CD8-positive, alpha-beta T cell (primary cell): ENCODE measurements at regions of chr20 and their contacts with region 1.

Region 1: DNA sequence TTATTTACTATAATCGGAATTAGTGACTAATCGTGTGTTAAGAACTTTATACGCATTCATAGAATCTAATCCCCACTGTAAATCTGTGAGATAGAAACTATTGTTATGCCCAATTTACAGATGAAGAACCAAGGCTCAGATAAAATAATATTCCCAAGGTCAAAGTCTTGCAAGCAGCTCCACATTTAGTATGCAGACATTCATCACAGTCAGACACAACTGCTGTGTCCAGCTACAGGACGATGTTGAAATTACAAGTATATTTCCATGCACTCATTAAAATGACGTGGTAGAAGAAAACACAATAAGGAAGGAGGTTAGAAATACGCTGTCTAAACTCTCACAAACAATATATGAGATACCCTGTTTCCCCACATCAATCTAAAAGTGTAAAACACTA is 82.5 kb downstream of the PREX1 start:
- DNase-seq: no peak
- ATAC-seq: no peak
- H3K4me3 ChIP-seq: no peak overlapping the region
- H3K4me3 Mint-ChIP-seq: no peak overlapping the region
- H3K27ac ChIP-seq: no peak overlapping the region
- H3K27ac Mint-ChIP-seq: peak overlapping the region; percentile 14
- H3K4me1 ChIP-seq: peaks cover 27% of the 10 kb centered on the region
- H3K4me1 Mint-ChIP-seq: peaks cover 39% of the 10 kb centered on the region
- H3K27me3 ChIP-seq: no peaks in the 10 kb centered on the region
- H3K27me3 Mint-ChIP-seq: no peaks in the 10 kb centered on the region
- CTCF ChIP-seq: no peak

Region 2: DNA sequence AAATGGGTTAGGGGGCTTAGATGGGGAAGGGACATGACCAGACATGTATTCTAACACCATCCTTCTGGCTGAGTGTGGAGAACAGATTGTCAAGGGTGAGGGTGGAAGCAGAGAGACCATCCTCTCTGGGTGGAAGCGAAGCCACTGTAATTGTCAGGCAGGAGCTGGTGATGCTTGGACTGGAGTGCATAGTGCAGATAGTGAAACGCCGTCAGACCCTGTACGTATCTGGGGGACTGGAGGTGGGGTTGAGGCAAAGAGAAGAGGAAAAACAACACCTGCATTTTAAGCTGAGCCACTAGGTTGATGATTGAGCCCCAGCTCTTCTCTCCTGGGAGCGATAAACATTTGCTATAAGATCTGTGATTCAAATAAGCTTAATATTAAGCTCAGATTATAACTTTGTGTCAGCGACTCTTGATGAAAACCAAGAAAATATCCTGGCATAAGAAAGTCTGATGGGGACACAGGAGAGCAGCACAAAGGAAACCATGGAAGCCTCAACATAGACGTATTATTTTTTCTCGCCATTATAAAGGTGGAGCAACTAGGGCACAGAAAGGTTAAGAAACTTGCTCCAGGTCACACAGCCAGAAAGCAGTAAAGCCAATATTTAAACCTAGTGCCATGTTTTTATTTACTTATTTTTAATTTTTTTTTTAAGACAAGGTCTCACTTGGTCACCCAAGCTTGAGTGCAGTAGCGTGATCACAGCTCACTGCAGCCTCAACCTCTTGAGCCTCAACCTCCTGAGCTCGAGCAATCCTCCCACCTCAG is 177.0 kb before region 1 on chr20:
- CTCF ChIA-PET with region 1: no interaction called
- POLR2A ChIA-PET with region 1: no interaction called
- intact Hi-C with region 1: no loop called
- DNase-seq: no peak
- ATAC-seq: no peak
- H3K4me3 ChIP-seq: no peak overlapping the region
- H3K4me3 Mint-ChIP-seq: no peak overlapping the region
- H3K27ac ChIP-seq: no peak overlapping the region
- H3K27ac Mint-ChIP-seq: no peak overlapping the region
- H3K4me1 ChIP-seq: no peaks in the 10 kb centered on the region
- H3K4me1 Mint-ChIP-seq: no peaks in the 10 kb centered on the region
- H3K27me3 ChIP-seq: no peaks in the 10 kb centered on the region
- H3K27me3 Mint-ChIP-seq: peaks cover 6% of the 10 kb centered on the region
- CTCF ChIP-seq: no peak

Region 3: GRCh38 chr20:48760403-48760983 is 15.2 kb after region 1 on chr20:
- CTCF ChIA-PET with region 1: interaction called, 3 read pairs
- POLR2A ChIA-PET with region 1: interaction called, 21 read pairs
- intact Hi-C with region 1: loop called in 1 of 2 experiments (anchors 2 kb)
- DNase-seq: peak; percentile 34 to 95 (median 82)
- ATAC-seq: peak; percentile 69
- H3K4me3 ChIP-seq: peak overlapping the region; percentile 36 to 51
- H3K4me3 Mint-ChIP-seq: peak overlapping the region; percentile 76
- H3K27ac ChIP-seq: peak overlapping the region; percentile 87 to 93
- H3K27ac Mint-ChIP-seq: peak overlapping the region; percentile 99
- H3K4me1 ChIP-seq: peaks cover 78% of the 10 kb centered on the region
- H3K4me1 Mint-ChIP-seq: peaks cover 86% of the 10 kb centered on the region
- H3K27me3 ChIP-seq: no peaks in the 10 kb centered on the region
- H3K27me3 Mint-ChIP-seq: no peaks in the 10 kb centered on the region
- CTCF ChIP-seq: no peak

Region 4: GRCh38 chr20:48837014-48837413 is 91.7 kb after region 1 on chr20:
- CTCF ChIA-PET with region 1: no interaction called
- POLR2A ChIA-PET with region 1: no interaction called
- intact Hi-C with region 1: no loop called
- DNase-seq: no peak
- ATAC-seq: no peak
- H3K4me3 ChIP-seq: no peak overlapping the region
- H3K4me3 Mint-ChIP-seq: no peak overlapping the region
- H3K27ac ChIP-seq: no peak overlapping the region
- H3K27ac Mint-ChIP-seq: no peak overlapping the region
- H3K4me1 ChIP-seq: no peaks in the 10 kb centered on the region
- H3K4me1 Mint-ChIP-seq: peaks cover 4% of the 10 kb centered on the region
- H3K27me3 ChIP-seq: no peaks in the 10 kb centered on the region
- H3K27me3 Mint-ChIP-seq: no peaks in the 10 kb centered on the region
- CTCF ChIP-seq: no peak